ENCODE measurements at regions of chr10 and their contacts with region 1.

Region 1: DNA sequence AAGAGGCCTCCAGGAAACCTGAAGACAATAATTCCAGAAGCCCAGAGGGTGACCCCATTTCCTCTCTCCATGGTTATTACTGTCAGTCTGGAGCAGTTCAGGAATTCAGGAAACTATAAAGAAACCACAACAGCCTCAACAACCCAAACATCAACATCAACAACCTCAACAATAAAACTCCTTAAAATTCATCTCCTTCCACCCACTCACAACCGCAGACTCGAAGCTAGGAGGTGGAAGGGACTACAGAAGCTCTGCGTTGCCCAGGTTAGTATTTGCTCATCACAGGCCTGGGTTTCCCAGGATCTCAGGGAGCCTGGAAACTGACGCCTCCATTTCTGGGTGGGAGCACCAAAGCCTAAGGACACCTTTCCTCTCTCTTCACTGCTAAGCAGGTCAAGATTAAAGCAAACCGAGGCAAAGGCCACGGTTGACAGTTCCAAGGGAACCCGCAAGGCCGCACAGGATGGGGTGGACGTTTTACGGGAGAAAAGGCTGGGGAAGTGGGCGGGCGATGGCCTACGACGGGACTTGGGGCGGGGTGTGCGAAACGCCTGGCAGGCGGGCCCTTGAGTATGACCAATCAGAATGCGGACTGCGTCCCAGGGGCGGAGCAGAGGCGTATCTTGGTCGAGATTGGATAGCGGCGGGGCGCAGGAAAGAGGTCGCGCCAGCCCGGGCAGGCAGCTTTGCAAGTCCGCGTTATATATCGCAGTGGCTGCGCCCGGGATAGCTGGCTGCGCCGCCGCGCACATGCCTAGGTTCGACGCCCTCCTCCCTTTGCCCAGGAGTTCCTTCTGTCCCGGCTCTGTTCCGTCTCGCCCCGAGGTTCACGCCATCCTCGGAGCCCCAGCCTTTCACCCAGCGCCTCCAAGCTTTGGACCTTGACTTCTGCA is at the start of gene ELOVL3:
- DNase-seq: peak; percentile 96
- H3K4me3 ChIP-seq: peak within 1 kb of the TSS; percentile 44
- H3K4me3 Mint-ChIP-seq: peak within 1 kb of the TSS; percentile 73
- H3K27ac Mint-ChIP-seq: peak within 1 kb of the TSS; percentile 7
- H3K4me1 ChIP-seq: peaks cover 13% of the 10 kb centered on the region
- H3K4me1 Mint-ChIP-seq: peaks cover 6% of the 10 kb centered on the region
- H3K27me3 ChIP-seq: no peaks in the 10 kb centered on the region; the same call in 1 of the 2 replicates
- H3K27me3 Mint-ChIP-seq: peaks cover 17% of the 10 kb centered on the region
- CTCF ChIP-seq: no peak
- total RNA-seq, gene ELOVL3: 1.4 and 2.2 TPM in 2 replicates

Region 2: DNA sequence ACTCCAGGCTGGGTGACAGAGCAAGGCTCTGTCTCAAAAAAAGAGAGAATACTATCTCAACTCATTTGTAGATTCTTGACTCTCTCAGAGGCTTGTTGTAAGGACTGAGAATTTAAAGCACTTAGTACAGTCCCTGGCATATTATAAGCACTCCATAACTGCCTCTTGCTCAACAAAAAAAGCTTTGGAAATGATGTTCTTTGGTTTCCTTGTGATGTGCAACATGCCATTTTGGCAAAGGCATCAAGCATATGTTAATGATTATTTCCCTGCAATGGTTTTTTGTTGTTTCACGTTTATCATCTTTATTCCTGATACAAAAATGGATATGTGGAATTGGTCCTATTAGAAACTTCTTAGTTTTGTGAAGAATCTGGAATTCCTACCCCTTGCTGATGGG is 58.0 kb before region 1 on chr10:
- CTCF ChIA-PET with region 1: interaction called, 19 read pairs
- POLR2A ChIA-PET with region 1: no interaction called
- intact Hi-C with region 1: loop called (anchors 1 kb)
- DNase-seq: no peak
- H3K4me3 ChIP-seq: no peak overlapping the region
- H3K4me3 Mint-ChIP-seq: no peak overlapping the region
- H3K27ac Mint-ChIP-seq: no peak overlapping the region
- H3K4me1 ChIP-seq: no peaks in the 10 kb centered on the region
- H3K4me1 Mint-ChIP-seq: no peaks in the 10 kb centered on the region
- H3K27me3 ChIP-seq: no peaks in the 10 kb centered on the region
- H3K27me3 Mint-ChIP-seq: no peaks in the 10 kb centered on the region
- CTCF ChIP-seq: no peak

Region 3: GRCh38 chr10:102352066-102352715 is 126.3 kb after region 1 on chr10:
- CTCF ChIA-PET with region 1: interaction called, 115 read pairs
- POLR2A ChIA-PET with region 1: no interaction called
- intact Hi-C with region 1: loop called (anchors 1 kb)
- DNase-seq: peak; percentile 68 to 74
- H3K4me3 ChIP-seq: no peak overlapping the region
- H3K4me3 Mint-ChIP-seq: no peak overlapping the region
- H3K27ac Mint-ChIP-seq: peak overlapping the region; percentile 53
- H3K4me1 ChIP-seq: no peaks in the 10 kb centered on the region
- H3K4me1 Mint-ChIP-seq: no peaks in the 10 kb centered on the region
- H3K27me3 ChIP-seq: no peaks in the 10 kb centered on the region
- H3K27me3 Mint-ChIP-seq: no peaks in the 10 kb centered on the region
- CTCF ChIP-seq: peak; percentile 87 to 92

Region 4: DNA sequence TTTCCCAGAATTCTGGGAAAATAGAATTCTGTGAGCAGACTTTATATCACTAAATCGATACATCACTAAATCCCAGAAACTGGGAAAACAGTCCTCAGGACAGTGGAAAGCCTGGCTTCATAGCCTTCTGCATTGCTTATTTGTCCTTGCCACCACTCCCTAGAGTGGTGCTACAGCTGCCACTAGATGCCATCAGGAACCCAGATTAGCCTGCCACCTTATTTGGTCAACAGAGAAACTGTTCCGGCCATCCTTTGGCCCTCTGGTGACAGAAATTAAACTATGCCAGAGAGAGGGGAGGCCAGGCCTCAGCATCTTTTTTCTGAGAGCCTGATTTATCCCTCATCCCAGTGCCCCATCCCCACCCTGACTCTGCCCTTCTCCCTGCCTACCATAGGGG is 150.0 kb after region 1 on chr10:
- CTCF ChIA-PET with region 1: no interaction called
- POLR2A ChIA-PET with region 1: no interaction called
- intact Hi-C with region 1: no loop called
- DNase-seq: no peak
- H3K4me3 ChIP-seq: no peak overlapping the region
- H3K4me3 Mint-ChIP-seq: no peak overlapping the region
- H3K27ac Mint-ChIP-seq: no peak overlapping the region
- H3K4me1 ChIP-seq: no peaks in the 10 kb centered on the region
- H3K4me1 Mint-ChIP-seq: no peaks in the 10 kb centered on the region
- H3K27me3 ChIP-seq: no peaks in the 10 kb centered on the region
- H3K27me3 Mint-ChIP-seq: no peaks in the 10 kb centered on the region
- CTCF ChIP-seq: no peak

Region 5: GRCh38 chr10:102399217-102400089 is 173.6 kb after region 1 on chr10:
- CTCF ChIA-PET with region 1: interaction called, 21 read pairs
- POLR2A ChIA-PET with region 1: interaction called, 3 read pairs
- intact Hi-C with region 1: loop called (anchors 2 kb)
- DNase-seq: peak; percentile 76 to 91
- H3K4me3 ChIP-seq: peak overlapping the region; percentile 53
- H3K4me3 Mint-ChIP-seq: peak overlapping the region; percentile 64
- H3K27ac Mint-ChIP-seq: peak overlapping the region; percentile 29
- H3K4me1 ChIP-seq: peaks cover 35% of the 10 kb centered on the region
- H3K4me1 Mint-ChIP-seq: peaks cover 24% of the 10 kb centered on the region
- H3K27me3 ChIP-seq: no peaks in the 10 kb centered on the region
- H3K27me3 Mint-ChIP-seq: no peaks in the 10 kb centered on the region
- CTCF ChIP-seq: peak; percentile 75 to 93

Region 6: DNA sequence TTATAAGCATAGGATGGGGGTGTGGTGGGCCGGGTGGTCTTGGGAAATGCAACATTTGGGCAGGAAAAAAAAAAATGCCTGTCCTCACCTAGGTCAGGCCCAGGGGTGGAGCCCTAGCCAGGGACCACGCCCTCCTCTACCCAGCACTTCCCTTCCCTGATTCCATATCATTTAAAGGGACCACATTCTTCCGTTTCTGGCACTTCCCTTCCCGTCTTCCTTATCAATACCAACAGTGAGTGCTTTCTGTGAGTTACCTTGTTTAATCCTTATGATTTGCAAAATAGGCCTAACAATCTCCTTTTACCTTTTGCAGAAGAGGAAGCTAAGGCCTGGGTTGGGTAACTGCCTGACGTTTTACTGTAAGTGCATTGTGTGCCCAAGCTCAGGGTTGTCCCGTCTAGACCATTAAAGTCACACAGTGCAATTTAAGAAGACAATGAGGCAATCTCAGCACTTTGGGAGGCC is 242.1 kb after region 1 on chr10:
- CTCF ChIA-PET with region 1: no interaction called
- POLR2A ChIA-PET with region 1: no interaction called
- intact Hi-C with region 1: no loop called
- DNase-seq: no peak
- H3K4me3 ChIP-seq: no peak overlapping the region
- H3K4me3 Mint-ChIP-seq: no peak overlapping the region
- H3K27ac Mint-ChIP-seq: no peak overlapping the region
- H3K4me1 ChIP-seq: peaks cover 11% of the 10 kb centered on the region
- H3K4me1 Mint-ChIP-seq: peaks cover 10% of the 10 kb centered on the region
- H3K27me3 ChIP-seq: no peaks in the 10 kb centered on the region
- H3K27me3 Mint-ChIP-seq: no peaks in the 10 kb centered on the region
- CTCF ChIP-seq: no peak

Region 7: GRCh38 chr10:102583435-102584417 is 357.8 kb after region 1 on chr10:
- CTCF ChIA-PET with region 1: interaction called, 7 read pairs
- POLR2A ChIA-PET with region 1: no interaction called
- intact Hi-C with region 1: loop called (anchors 5 kb)
- DNase-seq: peak; percentile 83 to 86
- H3K4me3 ChIP-seq: no peak overlapping the region
- H3K4me3 Mint-ChIP-seq: no peak overlapping the region
- H3K27ac Mint-ChIP-seq: no peak overlapping the region
- H3K4me1 ChIP-seq: no peaks in the 10 kb centered on the region
- H3K4me1 Mint-ChIP-seq: no peaks in the 10 kb centered on the region
- H3K27me3 ChIP-seq: no peaks in the 10 kb centered on the region
- H3K27me3 Mint-ChIP-seq: no peaks in the 10 kb centered on the region
- CTCF ChIP-seq: peak; percentile 78 to 93